Cardiac septum (tissue), 1 donor: ENCODE measurements at regions of chr2 and their contacts with region 1.

Region 1: GRCh38 chr2:217785544-217786045 is 217.2 kb downstream of the TNS1 start:
- DNase-seq: peak; percentile 90

Region 2: DNA sequence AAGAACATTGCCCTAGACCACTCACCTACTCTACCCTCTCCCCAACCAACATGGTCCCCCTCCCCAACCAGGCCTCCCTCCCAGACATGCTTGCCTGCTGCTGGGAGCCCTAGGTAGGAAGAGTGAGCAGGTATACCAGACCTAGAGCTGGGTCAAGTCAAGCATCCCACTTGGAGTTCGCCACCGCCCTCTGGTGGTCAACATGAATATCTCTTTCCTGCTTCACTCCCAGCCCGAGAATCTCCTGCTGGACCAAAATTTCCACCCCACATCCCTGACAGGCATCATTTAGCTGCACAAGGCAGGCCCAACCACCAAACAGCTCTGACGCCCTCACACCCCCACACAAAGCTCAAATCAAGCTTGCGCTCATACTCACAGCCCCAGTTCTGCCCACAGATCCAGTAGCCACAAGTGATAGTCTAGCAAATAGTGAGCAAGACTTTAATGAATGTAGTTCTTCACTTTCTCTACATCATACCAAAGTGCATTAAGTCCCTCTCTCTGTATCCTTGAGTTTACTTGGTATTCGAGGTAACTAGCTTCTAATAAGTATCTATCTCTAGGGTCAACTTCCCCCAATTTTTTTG is 101.2 kb after region 1 on chr2:
- intact Hi-C with region 1: loop called (anchors 2 kb)
- DNase-seq: peak; percentile 89

Region 3: GRCh38 chr2:217943446-217944389 is 158.1 kb after region 1 on chr2:
- intact Hi-C with region 1: loop called (anchors 5 kb)
- DNase-seq: peak; percentile 94

Region 4: GRCh38 chr2:217988014-217988839 is 202.6 kb after region 1 on chr2:
- intact Hi-C with region 1: loop called (anchors 1 kb)
- DNase-seq: peak; percentile 91

Region 5: DNA sequence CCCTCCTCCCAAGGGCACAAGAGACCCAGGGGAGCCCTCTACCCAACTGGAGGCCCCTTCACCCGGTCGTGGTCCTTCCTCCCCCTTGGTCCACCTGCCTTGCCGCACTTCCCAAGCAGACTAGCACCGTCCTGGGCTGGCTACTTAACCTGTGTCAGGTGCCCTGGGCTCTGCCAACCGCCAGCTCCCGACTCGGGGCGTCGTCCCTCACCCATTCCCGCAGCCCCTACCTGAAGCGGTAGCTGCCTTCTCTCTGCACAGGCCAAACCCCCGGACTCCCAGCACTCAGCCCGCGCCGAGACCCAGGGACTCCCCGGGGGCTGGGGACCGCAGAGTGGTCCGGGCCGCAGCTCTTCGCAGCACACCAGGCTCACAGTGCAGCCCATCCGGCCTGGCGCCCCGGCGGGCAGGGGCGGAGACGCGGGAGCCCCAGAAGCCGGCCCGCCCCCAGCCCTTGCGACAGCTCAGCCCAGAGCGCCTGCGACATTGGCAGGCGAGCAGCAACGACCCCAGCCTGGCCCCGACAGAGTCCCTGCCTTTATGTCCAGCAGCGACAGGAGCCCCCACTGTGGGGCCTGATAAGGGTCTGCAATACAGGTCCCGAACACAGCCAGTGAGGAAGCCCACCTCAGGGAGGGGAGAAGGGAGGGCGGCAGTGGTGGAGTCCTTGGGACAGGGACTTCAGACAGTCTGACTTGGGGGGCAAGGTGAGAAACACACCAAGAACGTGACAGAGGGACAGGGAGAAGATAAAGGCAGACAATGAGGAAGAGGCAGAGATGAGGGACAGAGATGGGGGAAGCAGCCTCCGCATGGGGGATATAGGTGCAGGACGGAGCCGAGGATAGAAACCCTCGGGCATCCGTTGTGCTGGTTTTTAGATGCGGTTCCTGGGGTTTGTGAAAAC is 248.2 kb after region 1 on chr2:
- intact Hi-C with region 1: loop called (anchors 2 kb)
- DNase-seq: no peak

Region 6: GRCh38 chr2:218069606-218070300 is 284.2 kb after region 1 on chr2:
- intact Hi-C with region 1: loop called (anchors 2 kb)
- DNase-seq: no peak